ENCODE measurements at regions of chr5 and their contacts with region 1.

Region 1: DNA sequence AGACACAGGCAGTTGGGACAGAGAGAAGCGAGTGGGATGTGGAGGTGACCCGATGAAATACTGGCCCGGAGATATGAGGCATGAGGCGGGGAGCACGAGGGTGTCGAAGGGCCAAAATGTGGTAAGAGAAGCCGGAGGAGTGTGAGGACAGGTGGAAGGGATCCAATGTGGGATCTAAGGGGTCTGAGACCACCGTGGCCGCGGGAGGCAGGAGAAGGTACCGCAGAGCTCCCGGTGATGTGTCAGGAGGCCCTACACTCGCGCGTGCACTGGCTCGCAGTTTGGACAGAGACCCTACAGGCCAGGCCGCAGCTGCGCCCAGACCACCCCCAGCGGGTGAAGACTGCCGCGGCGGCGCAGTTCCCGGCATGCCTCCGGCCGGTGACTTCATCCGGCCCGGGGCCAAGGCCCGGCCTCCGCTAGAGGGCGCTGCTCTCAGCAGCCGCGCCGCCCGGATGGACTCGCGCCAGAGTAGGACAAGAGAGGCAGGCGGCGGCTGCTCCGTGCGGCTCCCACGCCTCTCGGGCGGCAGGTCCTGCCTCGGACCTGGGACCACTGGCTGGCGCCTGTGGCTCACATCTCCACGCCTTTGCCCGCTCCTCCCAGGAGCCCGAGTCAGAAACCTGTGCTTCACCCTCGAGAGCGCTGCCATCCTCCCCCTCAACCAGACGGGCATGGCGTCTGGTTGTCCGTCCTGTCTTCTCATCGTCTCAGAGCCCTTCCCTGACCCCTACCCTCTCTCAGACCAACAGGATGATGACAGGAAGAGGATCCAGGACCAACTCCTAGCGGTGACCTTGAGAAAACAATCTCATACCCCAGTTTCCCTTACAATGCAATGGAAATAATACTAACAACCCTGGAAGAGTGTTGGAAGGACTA is 35.4 kb upstream of the STING1 start:
- DNase-seq: peak; percentile 92
- ATAC-seq: peak; percentile 96
- H3K4me3 ChIP-seq: peak overlapping the region; percentile 41 to 68 (median 61)
- H3K4me3 Mint-ChIP-seq: peak overlapping the region; percentile 87
- H3K27ac ChIP-seq: peak overlapping the region; percentile 71 to 79
- H3K27ac Mint-ChIP-seq: peak overlapping the region; percentile 86
- H3K4me1 ChIP-seq: peaks cover 2 to 20% of the 10 kb centered on the region in 2 donors
- H3K4me1 Mint-ChIP-seq: peaks cover 23% of the 10 kb centered on the region
- H3K27me3 ChIP-seq: no peaks in the 10 kb centered on the region
- H3K27me3 Mint-ChIP-seq: no peaks in the 10 kb centered on the region
- CTCF ChIP-seq: peak; percentile 92

Region 2: GRCh38 chr5:139287890-139288635 is 229.9 kb before region 1 on chr5:
- CTCF ChIA-PET with region 1: interaction called, 15 read pairs
- POLR2A ChIA-PET with region 1: no interaction called
- intact Hi-C with region 1: loop called (anchors 1 kb)
- DNase-seq: peak; percentile 41
- ATAC-seq: peak; percentile 73
- H3K4me3 ChIP-seq: no peak overlapping the region
- H3K4me3 Mint-ChIP-seq: no peak overlapping the region
- H3K27ac ChIP-seq: no peak overlapping the region
- H3K27ac Mint-ChIP-seq: peak overlapping the region; percentile 0
- H3K4me1 ChIP-seq: peaks cover 2 to 4% of the 10 kb centered on the region in 2 donors
- H3K4me1 Mint-ChIP-seq: peaks cover 2% of the 10 kb centered on the region
- H3K27me3 ChIP-seq: no peaks in the 10 kb centered on the region
- H3K27me3 Mint-ChIP-seq: no peaks in the 10 kb centered on the region
- CTCF ChIP-seq: peak; percentile 17

Region 3: DNA sequence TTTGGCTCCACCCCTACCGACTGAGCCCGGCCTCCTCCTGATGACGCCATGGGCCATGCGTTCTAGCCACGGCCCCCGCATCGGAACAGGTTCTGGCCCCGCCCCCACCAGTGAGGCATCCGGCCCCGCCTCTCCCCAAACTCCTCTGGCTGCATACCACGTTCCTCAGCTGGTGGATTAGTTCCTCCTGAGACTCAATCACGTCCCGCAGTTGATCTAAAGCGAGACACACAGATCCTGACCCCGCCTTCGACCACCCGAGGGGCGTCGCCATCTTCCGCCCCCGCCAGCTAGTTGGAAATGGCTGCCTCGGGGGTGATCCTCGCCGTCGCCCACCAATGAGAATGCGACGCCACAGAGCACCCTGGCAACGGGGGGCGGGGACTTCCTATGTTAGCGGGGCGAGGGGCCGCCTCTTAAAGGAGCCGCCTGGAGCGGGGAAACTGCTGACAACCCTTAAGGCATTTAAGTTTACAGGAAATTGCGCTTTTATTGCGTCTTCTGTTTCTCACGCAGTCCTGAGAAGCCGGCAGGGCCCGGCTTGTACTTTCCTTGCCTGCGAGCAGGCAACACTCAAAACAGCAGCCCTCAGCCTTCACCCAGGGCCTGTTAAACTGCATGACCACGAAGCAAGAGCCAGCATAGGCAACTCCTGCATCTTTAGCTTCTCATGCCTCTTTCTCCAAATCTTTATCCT is 114.0 kb before region 1 on chr5 and contains the start of gene SPATA24:
- CTCF ChIA-PET with region 1: interaction called, 5 read pairs
- POLR2A ChIA-PET with region 1: no interaction called
- intact Hi-C with region 1: loop called (anchors 5 kb)
- DNase-seq: peak; percentile 99
- ATAC-seq: peak; percentile 85
- H3K4me3 ChIP-seq: peak within 1 kb of the TSS; percentile 50 to 73 (median 68)
- H3K4me3 Mint-ChIP-seq: peak within 1 kb of the TSS; percentile 95
- H3K27ac ChIP-seq: peak within 1 kb of the TSS; percentile 85 to 86
- H3K27ac Mint-ChIP-seq: peak within 1 kb of the TSS; percentile 97
- H3K4me1 ChIP-seq: peaks cover 33 to 43% of the 10 kb centered on the region in 2 donors
- H3K4me1 Mint-ChIP-seq: peaks cover 43% of the 10 kb centered on the region
- H3K27me3 ChIP-seq: no peaks in the 10 kb centered on the region
- H3K27me3 Mint-ChIP-seq: no peaks in the 10 kb centered on the region
- CTCF ChIP-seq: no peak
- total RNA-seq, gene SPATA24: 6.4 and 8.2 TPM in 2 replicates

Region 4: DNA sequence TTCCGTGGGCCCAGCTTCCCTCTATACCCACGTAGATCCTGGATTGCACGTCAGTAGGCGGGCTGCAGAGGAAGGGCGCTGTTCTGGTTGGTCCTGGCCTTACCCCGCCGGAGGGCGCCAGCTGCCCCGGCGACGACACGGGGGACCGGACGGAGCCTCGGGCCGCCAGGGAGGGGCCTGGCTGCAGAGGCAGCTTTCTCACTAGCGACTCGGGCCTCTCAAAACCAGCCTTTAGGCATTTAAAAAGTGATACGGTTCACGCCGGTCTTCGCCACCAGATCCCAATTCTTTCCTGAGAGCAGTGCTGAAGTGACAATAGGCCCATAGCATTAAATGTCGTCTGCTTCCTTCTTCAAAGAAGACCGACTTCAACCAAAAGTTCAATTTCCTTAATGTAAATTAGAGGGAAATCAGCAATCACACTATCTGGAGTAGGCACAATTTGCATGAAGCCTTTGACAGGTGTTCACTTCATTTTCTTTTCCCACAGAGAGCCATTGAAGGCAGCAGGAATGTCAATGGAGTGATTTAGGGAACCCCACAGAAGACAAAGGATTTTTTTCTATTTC is 25.6 kb after region 1 on chr5:
- CTCF ChIA-PET with region 1: interaction called, 6 read pairs
- POLR2A ChIA-PET with region 1: no interaction called
- intact Hi-C with region 1: loop called (anchors 1 kb)
- DNase-seq: peak; percentile 85
- ATAC-seq: peak; percentile 99
- H3K4me3 ChIP-seq: peak overlapping the region in 4 of 5 experiments; percentile 20 to 61 (median 50)
- H3K4me3 Mint-ChIP-seq: peak overlapping the region; percentile 79
- H3K27ac ChIP-seq: peak overlapping the region; percentile 71 to 74
- H3K27ac Mint-ChIP-seq: peak overlapping the region; percentile 90
- H3K4me1 ChIP-seq: peaks cover 6 to 16% of the 10 kb centered on the region in 2 donors
- H3K4me1 Mint-ChIP-seq: peaks cover 16% of the 10 kb centered on the region
- H3K27me3 ChIP-seq: no peaks in the 10 kb centered on the region
- H3K27me3 Mint-ChIP-seq: no peaks in the 10 kb centered on the region
- CTCF ChIP-seq: peak; percentile 57

Measured in B cell (primary cell).